A549 (cell line): ENCODE measurements at regions of chr10 and their contacts with region 1.

Region 1: DNA sequence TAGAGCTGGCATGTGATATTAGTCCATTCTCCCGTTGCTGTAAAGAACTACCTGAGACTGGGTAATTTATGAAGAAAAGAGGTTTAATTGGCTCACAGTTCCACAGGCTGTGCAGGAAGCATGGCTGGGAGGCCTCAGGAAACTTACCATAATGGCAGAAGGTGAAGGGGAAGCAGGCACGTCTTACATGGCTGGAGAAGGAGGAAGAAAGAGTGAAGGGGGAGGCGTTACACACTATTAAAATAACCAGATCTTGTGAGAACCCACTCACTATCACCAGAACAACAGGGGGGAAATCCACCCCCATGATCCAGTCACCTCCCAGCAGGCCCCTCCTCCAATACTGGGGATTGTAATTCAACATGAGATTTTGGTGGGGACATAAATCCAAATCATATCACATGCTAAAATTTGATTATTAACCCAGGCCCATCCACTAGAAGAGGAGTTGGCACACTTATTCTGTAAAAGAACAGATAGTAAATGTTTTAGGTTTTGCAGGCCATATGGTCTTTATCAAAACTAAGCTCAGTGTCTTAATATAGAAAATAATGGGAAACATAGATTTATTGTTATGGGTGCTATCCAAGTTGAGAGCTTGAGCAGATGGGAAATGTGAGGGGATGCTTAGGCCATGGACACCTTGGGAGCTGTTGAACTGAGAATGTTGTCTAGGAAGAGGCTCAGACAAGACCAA is 18.6 kb upstream of the HK1 start:
- DNase-seq: no peak
- ATAC-seq: no peak
- H3K4me3 ChIP-seq: no peak overlapping the region
- H3K27ac ChIP-seq: no peak overlapping the region
- H3K4me1 ChIP-seq: no peaks in the 10 kb centered on the region
- CTCF ChIP-seq: no peak
- EP300 ChIP-seq: no peak
- POLR2A ChIP-seq: no peak
- RAD21 ChIP-seq: no peak

Region 2: GRCh38 chr10:69269761-69270160 is 10.1 kb after region 1 on chr10:
- CTCF ChIA-PET with region 1: interaction called, 10 read pairs
- POLR2A ChIA-PET with region 1: no interaction called
- DNase-seq: no peak
- ATAC-seq: no peak
- H3K4me3 ChIP-seq: no peak overlapping the region
- H3K27ac ChIP-seq: peak overlapping the region in 1 of 2 experiments; percentile 7; a peak in 1 of 6 replicates
- H3K4me1 ChIP-seq: peaks cover 16% of the 10 kb centered on the region; the same call in 2 of the 3 replicates
- CTCF ChIP-seq: no peak
- EP300 ChIP-seq: no peak
- POLR2A ChIP-seq: no peak
- RAD21 ChIP-seq: no peak